ENCODE measurements at regions of chr15 and their contacts with region 1.

Region 1: DNA sequence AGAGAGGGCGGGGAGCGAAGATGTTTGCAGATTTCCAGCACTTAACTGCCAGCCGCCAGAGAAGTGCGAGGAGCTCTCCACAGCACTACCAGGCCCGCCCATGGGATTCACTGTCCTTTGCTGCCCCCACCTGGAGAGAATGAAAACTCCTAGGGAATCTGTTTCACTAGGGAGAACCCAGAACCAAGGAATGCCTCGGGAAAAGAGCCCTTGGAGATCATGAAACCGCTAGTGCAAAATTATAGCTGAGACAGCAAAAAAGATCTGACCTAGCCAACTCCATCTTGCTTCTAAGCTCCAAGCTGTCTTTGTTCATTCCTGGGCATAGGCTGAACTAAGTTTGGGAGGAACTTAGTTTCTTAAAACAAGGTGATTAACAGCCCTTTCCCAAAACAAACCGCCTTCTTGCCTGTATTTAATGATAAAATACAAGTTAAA is 82.6 kb upstream of the GCNT3 start:
- DNase-seq: peak; percentile 81
- H3K4me3 ChIP-seq: no peak overlapping the region
- H3K27ac ChIP-seq: no peak overlapping the region
- H3K4me1 ChIP-seq: peaks cover 28% of the 10 kb centered on the region
- CTCF ChIP-seq: peak; percentile 95

Region 2: DNA sequence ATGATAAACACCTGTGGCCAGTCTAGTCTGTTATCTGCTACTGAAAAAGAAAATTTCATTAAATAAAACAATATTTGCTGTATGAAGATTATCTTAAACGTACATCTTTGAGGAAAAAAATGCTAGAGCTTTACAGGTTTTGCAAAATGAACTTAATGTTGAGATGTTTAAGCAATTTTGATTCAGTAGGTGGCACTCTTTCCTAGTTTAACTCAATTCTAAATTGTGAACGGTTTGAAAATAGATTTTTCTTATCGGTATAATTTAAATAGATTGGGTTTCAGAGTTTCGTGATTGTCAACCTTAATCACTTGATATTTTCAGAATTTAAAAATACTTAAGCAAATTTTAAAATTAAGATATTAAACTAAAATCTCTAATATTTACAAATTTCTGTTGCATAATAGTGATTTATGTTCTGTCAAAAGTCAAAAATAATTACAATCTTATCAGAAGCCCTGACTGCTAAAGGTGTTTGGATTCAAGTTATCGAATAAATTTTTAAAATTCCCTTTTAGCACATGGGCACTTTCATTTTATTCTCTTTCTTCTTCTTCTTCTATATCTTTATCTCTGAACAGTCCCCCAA is 548.5 kb before region 1 on chr15:
- CTCF ChIA-PET with region 1: no interaction called
- POLR2A ChIA-PET with region 1: interaction called, 3 read pairs
- intact Hi-C with region 1: loop called (anchors 5 kb)
- DNase-seq: peak; percentile 65
- H3K4me3 ChIP-seq: peak overlapping the region; percentile 39
- H3K27ac ChIP-seq: peak overlapping the region; percentile 84
- H3K4me1 ChIP-seq: peaks cover 71% of the 10 kb centered on the region
- CTCF ChIP-seq: peak; percentile 89

Region 3: GRCh38 chr15:59501597-59501996 is 27.4 kb before region 1 on chr15:
- CTCF ChIA-PET with region 1: interaction called, 3 read pairs
- POLR2A ChIA-PET with region 1: interaction called, 3 read pairs
- intact Hi-C with region 1: loop called (anchors 1 kb)
- DNase-seq: peak; percentile 66
- H3K4me3 ChIP-seq: no peak overlapping the region
- H3K27ac ChIP-seq: no peak overlapping the region
- H3K4me1 ChIP-seq: no peaks in the 10 kb centered on the region
- CTCF ChIP-seq: peak; percentile 96

Region 4: DNA sequence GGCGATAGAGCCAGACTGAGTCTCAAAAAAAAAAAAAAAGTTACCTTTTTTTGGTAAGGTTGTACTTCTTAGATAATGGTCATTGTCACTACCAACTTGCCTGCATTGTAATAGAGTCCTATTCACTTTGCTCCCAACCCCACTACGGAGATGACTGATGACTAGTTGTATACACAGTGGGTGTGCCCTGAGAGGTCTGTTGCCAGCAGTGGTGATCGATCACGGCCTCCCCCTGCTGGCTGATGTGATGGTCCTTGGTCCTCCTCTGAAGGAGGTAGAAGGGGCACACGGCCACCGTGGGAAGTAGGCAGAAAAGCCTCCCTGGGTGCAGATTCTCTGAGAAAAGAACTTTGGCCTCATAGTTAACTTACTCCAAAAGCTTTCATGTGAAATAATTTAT is 93.3 kb after region 1 on chr15:
- CTCF ChIA-PET with region 1: interaction called, 3 read pairs
- POLR2A ChIA-PET with region 1: interaction called, 3 read pairs
- intact Hi-C with region 1: loop called (anchors 2 kb)
- DNase-seq: peak; percentile 51
- H3K4me3 ChIP-seq: no peak overlapping the region
- H3K27ac ChIP-seq: no peak overlapping the region
- H3K4me1 ChIP-seq: no peaks in the 10 kb centered on the region
- CTCF ChIP-seq: peak; percentile 69

Region 5: DNA sequence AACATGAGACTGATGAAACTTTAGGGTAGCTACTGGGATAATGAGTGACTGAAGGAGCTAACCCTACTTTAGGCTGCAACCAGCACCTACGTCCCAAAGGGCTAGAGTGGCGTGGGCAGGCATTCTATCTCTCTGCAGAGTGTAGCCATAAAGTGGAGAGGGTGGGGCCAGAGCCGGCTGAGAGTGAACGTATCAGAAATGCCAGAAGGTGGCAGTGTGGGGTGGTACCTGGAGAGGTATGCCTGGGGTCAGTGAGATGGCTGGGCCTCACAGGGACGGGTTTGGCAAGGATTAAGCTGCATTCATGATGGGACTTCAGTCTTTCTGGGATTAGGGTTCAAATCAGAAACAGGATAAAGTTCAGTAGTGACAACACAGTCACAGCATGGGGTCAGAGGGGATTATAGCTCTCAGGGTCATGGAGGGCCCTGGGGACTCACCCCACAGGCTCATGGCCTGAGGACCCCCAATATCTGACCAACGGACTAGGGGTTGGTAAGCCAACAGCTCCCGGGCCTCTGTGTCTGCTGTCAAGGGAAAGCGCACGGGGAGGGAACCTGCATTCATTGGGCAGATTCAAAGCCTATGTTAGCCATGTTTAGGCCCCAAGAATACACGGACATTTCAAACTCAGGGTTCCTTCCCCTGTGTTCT is 388.6 kb after region 1 on chr15:
- CTCF ChIA-PET with region 1: no interaction called
- POLR2A ChIA-PET with region 1: no interaction called
- intact Hi-C with region 1: loop called (anchors 5 kb)
- DNase-seq: peak; percentile 53
- H3K4me3 ChIP-seq: no peak overlapping the region
- H3K27ac ChIP-seq: no peak overlapping the region
- H3K4me1 ChIP-seq: no peaks in the 10 kb centered on the region
- CTCF ChIP-seq: peak; percentile 81

Region 6: DNA sequence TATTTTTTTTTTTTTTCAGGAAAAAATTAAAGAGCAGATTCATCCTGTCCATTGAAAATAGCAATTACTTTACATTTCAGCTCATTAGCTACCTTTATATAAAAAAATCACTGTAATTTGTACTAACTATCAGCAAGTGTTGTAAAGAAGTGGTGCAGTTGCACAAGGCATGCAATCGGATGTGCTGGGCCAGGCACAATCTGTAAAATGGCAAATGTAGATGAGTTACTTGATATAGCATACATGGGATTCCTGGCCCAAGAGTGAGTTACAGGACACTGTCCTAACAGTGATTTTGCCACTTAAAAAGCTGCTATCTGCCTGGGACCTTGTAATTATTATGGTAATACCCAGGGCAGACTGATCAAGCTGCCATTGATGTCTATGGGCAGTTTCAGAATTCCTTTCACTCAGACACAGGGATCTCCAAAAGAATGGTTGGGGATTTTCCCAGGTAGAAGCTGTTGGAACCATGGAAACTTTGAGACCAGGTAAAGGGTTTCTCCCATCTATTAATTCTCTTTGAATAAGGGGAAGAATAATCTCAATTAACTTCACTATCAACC is 1132.2 kb after region 1 on chr15:
- CTCF ChIA-PET with region 1: no interaction called
- POLR2A ChIA-PET with region 1: no interaction called
- intact Hi-C with region 1: no loop called
- DNase-seq: no peak
- H3K4me3 ChIP-seq: no peak overlapping the region
- H3K27ac ChIP-seq: no peak overlapping the region
- H3K4me1 ChIP-seq: no peaks in the 10 kb centered on the region
- CTCF ChIP-seq: no peak